ENCODE measurements at regions of chr10 and their contacts with region 1.

Region 1: GRCh38 chr10:98467506-98468346 is 21.0 kb upstream of the HPS1 start:
- DNase-seq: peak; percentile 70 to 80 (median 74)
- ATAC-seq: peak; percentile 86 to 98 (median 94)
- H3K4me3 ChIP-seq: peak overlapping the region; percentile 35 to 67 (median 60)
- H3K27ac ChIP-seq: peak overlapping the region in 1 of 12 donors; percentile 7
- H3K4me1 ChIP-seq: peaks cover 0 to 30% (median 5%) of the 10 kb centered on the region in 12 donors
- H3K27me3 ChIP-seq: peaks cover 0 to 8% (median 0%) of the 10 kb centered on the region in 9 donors
- CTCF ChIP-seq: peak; percentile 71 to 92 (median 82)
- POLR2A ChIP-seq: no peak

Region 2: GRCh38 chr10:98414932-98415730 is 52.6 kb before region 1 on chr10 and contains the start of gene PYROXD2:
- intact Hi-C with region 1: no loop called
- DNase-seq: peak; percentile 93 to 96 (median 96)
- ATAC-seq: peak; percentile 95 to 99 (median 98)
- H3K4me3 ChIP-seq: peak within 1 kb of the TSS; percentile 9 to 67 (median 60)
- H3K27ac ChIP-seq: peak within 1 kb of the TSS; percentile 67 to 90 (median 84)
- H3K4me1 ChIP-seq: peaks cover 0 to 50% (median 24%) of the 10 kb centered on the region in 12 donors
- H3K27me3 ChIP-seq: no peaks in the 10 kb centered on the region
- CTCF ChIP-seq: peak in 1 of 12 donors; percentile 12
- POLR2A ChIP-seq: peak in 1 of 2 donors; percentile 78
- total RNA-seq, gene PYROXD2: 5.2 to 22.0 (median 11.1) TPM

Region 3: GRCh38 chr10:98425511-98426352 is 42.0 kb before region 1 on chr10:
- intact Hi-C with region 1: loop called in 1 of 10 experiments (anchors 2 kb)
- DNase-seq: peak in 2 of 5 donors; percentile 24 to 52
- ATAC-seq: peak; percentile 28 to 58 (median 54)
- H3K4me3 ChIP-seq: no peak overlapping the region
- H3K27ac ChIP-seq: no peak overlapping the region
- H3K4me1 ChIP-seq: peaks cover 0 to 8% (median under 1%) of the 10 kb centered on the region in 12 donors
- H3K27me3 ChIP-seq: no peaks in the 10 kb centered on the region
- CTCF ChIP-seq: peak; percentile 58 to 78 (median 66)
- POLR2A ChIP-seq: no peak

Region 4: GRCh38 chr10:99172130-99172738 is 704.5 kb after region 1 on chr10:
- intact Hi-C with region 1: loop called in 7 of 10 experiments (anchors 2 to 10 kb)
- DNase-seq: no peak
- ATAC-seq: peak in 1 of 4 donors; percentile 42
- H3K4me3 ChIP-seq: no peak overlapping the region
- H3K27ac ChIP-seq: no peak overlapping the region
- H3K4me1 ChIP-seq: no peaks in the 10 kb centered on the region
- H3K27me3 ChIP-seq: peaks cover 0 to 7% (median 0%) of the 10 kb centered on the region in 9 donors
- CTCF ChIP-seq: peak in 10 of 12 donors; percentile 9 to 57 (median 44)
- POLR2A ChIP-seq: no peak

Region 5: GRCh38 chr10:99364125-99364524 is 896.4 kb after region 1 on chr10:
- intact Hi-C with region 1: loop called in 1 of 10 experiments (anchors 10 kb)
- DNase-seq: no peak
- ATAC-seq: no peak
- H3K4me3 ChIP-seq: no peak overlapping the region
- H3K27ac ChIP-seq: no peak overlapping the region
- H3K4me1 ChIP-seq: no peaks in the 10 kb centered on the region
- H3K27me3 ChIP-seq: peaks cover 0 to 5% (median 0%) of the 10 kb centered on the region in 9 donors
- CTCF ChIP-seq: no peak
- POLR2A ChIP-seq: no peak

Region 6: GRCh38 chr10:99430451-99431189 is 962.9 kb after region 1 on chr10 and contains the start of gene GOT1:
- intact Hi-C with region 1: loop called in 1 of 10 experiments (anchors 10 kb)
- DNase-seq: peak; percentile 94 to 98 (median 96)
- ATAC-seq: peak; percentile 95 to 97 (median 96)
- H3K4me3 ChIP-seq: peak within 1 kb of the TSS; percentile 71 to 96 (median 85)
- H3K27ac ChIP-seq: peak within 1 kb of the TSS; percentile 90 to 99 (median 97)
- H3K4me1 ChIP-seq: peaks cover 0 to 56% (median 30%) of the 10 kb centered on the region in 12 donors
- H3K27me3 ChIP-seq: no peaks in the 10 kb centered on the region
- CTCF ChIP-seq: no peak
- POLR2A ChIP-seq: peak; percentile 50 to 81
- total RNA-seq, gene GOT1: 294 to 815 (median 505) TPM

Region 7: GRCh38 chr10:99620713-99621453 is 1153.2 kb after region 1 on chr10:
- intact Hi-C with region 1: loop called in 1 of 10 experiments (anchors 10 kb)
- DNase-seq: peak; percentile 92 to 96 (median 95)
- ATAC-seq: peak; percentile 59 to 95 (median 93)
- H3K4me3 ChIP-seq: peak overlapping the region; percentile 32 to 98 (median 91)
- H3K27ac ChIP-seq: peak overlapping the region; percentile 91 to 100 (median 98)
- H3K4me1 ChIP-seq: peaks cover 10 to 48% (median 36%) of the 10 kb centered on the region in 12 donors
- H3K27me3 ChIP-seq: no peaks in the 10 kb centered on the region
- CTCF ChIP-seq: peak in 1 of 12 donors; percentile 12
- POLR2A ChIP-seq: peak; percentile 42 to 59

Measured in heart left ventricle (tissue), 16 donors.